B cell (primary cell): ENCODE measurements at regions of chr7 and their contacts with region 1.

Region 1: GRCh38 chr7:144127703-144128334 is 4.8 kb downstream of the OR2A14 start:
- DNase-seq: peak; percentile 82
- ATAC-seq: peak; percentile 98
- H3K4me3 ChIP-seq: no peak overlapping the region
- H3K4me3 Mint-ChIP-seq: no peak overlapping the region
- H3K27ac ChIP-seq: no peak overlapping the region
- H3K27ac Mint-ChIP-seq: no peak overlapping the region
- H3K4me1 ChIP-seq: no peaks in the 10 kb centered on the region
- H3K4me1 Mint-ChIP-seq: no peaks in the 10 kb centered on the region
- H3K27me3 ChIP-seq: no peaks in the 10 kb centered on the region
- H3K27me3 Mint-ChIP-seq: peaks cover 5% of the 10 kb centered on the region
- CTCF ChIP-seq: peak; percentile 89

Region 2: GRCh38 chr7:143733876-143734275 is 393.9 kb before region 1 on chr7:
- CTCF ChIA-PET with region 1: interaction called, 10 read pairs
- POLR2A ChIA-PET with region 1: no interaction called
- intact Hi-C with region 1: no loop called
- DNase-seq: no peak
- ATAC-seq: no peak
- H3K4me3 ChIP-seq: no peak overlapping the region
- H3K4me3 Mint-ChIP-seq: no peak overlapping the region
- H3K27ac ChIP-seq: no peak overlapping the region
- H3K27ac Mint-ChIP-seq: no peak overlapping the region
- H3K4me1 ChIP-seq: no peaks in the 10 kb centered on the region
- H3K4me1 Mint-ChIP-seq: no peaks in the 10 kb centered on the region
- H3K27me3 ChIP-seq: no peaks in the 10 kb centered on the region
- H3K27me3 Mint-ChIP-seq: no peaks in the 10 kb centered on the region
- CTCF ChIP-seq: no peak

Region 3: DNA sequence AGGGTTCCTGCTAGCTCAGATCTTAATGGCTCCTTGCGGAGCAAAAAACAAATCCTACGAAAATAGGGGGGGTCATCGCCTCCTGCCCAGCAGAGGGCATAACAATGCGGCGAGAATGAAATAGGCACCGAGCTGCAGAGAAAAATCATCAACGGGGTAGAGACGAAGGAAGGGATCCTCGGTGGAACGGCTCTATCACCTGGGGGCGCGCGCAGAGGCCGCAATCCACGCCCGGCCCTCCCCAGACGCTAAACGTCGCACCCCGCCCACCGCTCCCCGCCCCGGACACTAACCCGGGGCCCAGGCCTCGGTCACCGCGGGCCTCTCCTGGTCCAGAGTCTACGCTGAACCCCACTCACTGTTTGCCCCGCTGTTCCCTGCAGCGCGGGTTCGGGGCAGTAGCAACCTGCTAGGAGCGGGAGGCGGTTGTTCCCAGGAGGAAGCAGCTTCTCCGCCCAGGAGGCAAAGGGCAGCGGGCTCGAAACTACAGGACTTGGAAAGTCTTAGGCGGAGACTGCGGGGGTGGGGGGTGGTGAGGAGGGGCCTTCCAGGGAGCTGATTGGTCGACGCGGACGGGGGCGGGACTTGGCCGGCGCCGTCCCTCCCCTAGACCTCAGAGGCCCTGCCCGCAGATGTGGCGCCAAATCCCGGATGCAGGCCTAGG is 226.0 kb before region 1 on chr7 and contains the start of gene TCAF1:
- CTCF ChIA-PET with region 1: interaction called, 15 read pairs
- POLR2A ChIA-PET with region 1: no interaction called
- intact Hi-C with region 1: no loop called
- DNase-seq: peak; percentile 92
- ATAC-seq: peak; percentile 95
- H3K4me3 ChIP-seq: peak within 1 kb of the TSS; percentile 59 to 96 (median 87)
- H3K4me3 Mint-ChIP-seq: peak within 1 kb of the TSS; percentile 99
- H3K27ac ChIP-seq: peak within 1 kb of the TSS; percentile 34 to 67
- H3K27ac Mint-ChIP-seq: peak within 1 kb of the TSS; percentile 95
- H3K4me1 ChIP-seq: peaks cover 6 to 10% of the 10 kb centered on the region in 2 donors
- H3K4me1 Mint-ChIP-seq: peaks cover 24% of the 10 kb centered on the region
- H3K27me3 ChIP-seq: no peaks in the 10 kb centered on the region
- H3K27me3 Mint-ChIP-seq: no peaks in the 10 kb centered on the region
- CTCF ChIP-seq: peak; percentile 42
- total RNA-seq, gene TCAF1: 17.3 and 19.7 TPM in 2 replicates

Region 4: DNA sequence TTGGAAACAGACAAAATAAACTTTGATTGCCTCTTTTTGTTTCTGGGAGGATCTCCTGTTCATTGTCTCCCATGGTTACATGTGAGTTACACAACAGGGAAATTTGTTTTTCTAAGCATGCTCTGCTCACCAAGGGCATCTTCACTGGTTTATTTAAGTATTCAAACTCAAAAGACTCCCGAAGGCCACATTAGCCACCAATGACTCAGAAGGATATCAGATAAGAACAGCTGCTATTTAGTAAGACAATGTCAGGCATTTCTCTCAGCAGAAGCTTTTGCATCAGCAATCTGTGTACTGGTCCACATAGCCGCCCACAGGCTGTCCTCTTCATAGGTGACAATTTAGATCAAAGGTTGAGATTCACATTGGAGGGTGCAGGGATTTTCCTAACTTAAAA is 108.4 kb before region 1 on chr7:
- CTCF ChIA-PET with region 1: no interaction called
- POLR2A ChIA-PET with region 1: no interaction called
- intact Hi-C with region 1: no loop called
- DNase-seq: no peak
- ATAC-seq: no peak
- H3K4me3 ChIP-seq: no peak overlapping the region
- H3K4me3 Mint-ChIP-seq: no peak overlapping the region
- H3K27ac ChIP-seq: no peak overlapping the region
- H3K27ac Mint-ChIP-seq: no peak overlapping the region
- H3K4me1 ChIP-seq: no peaks in the 10 kb centered on the region
- H3K4me1 Mint-ChIP-seq: no peaks in the 10 kb centered on the region
- H3K27me3 ChIP-seq: no peaks in the 10 kb centered on the region
- H3K27me3 Mint-ChIP-seq: no peaks in the 10 kb centered on the region
- CTCF ChIP-seq: no peak

Region 5: DNA sequence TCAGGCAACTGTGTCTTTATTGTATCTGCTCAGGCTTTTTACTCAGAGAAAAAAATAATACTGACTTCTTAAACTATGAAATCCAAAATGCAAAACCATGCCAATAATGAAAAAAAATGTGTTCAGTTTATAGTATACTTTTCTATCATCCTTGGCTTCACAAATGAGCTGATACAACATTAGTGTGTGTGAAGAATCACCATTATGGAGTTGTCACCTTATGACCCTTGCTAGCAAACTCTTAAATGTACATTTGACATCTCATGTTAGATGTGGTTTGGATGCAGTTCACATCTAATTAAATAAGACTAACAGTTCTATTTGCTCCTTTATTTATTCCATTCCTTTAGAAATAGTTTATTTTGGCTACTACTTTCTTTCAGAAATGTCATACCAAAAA is 22.6 kb before region 1 on chr7:
- CTCF ChIA-PET with region 1: no interaction called
- POLR2A ChIA-PET with region 1: no interaction called
- intact Hi-C with region 1: no loop called
- DNase-seq: no peak
- ATAC-seq: no peak
- H3K4me3 ChIP-seq: no peak overlapping the region
- H3K4me3 Mint-ChIP-seq: no peak overlapping the region
- H3K27ac ChIP-seq: no peak overlapping the region
- H3K27ac Mint-ChIP-seq: no peak overlapping the region
- H3K4me1 ChIP-seq: no peaks in the 10 kb centered on the region
- H3K4me1 Mint-ChIP-seq: no peaks in the 10 kb centered on the region
- H3K27me3 ChIP-seq: peaks cover 0 to 3% (median 0%) of the 10 kb centered on the region in 4 experiments
- H3K27me3 Mint-ChIP-seq: peaks cover 12% of the 10 kb centered on the region
- CTCF ChIP-seq: no peak

Region 6: GRCh38 chr7:145350334-145350733 is 1222.5 kb after region 1 on chr7:
- CTCF ChIA-PET with region 1: no interaction called
- POLR2A ChIA-PET with region 1: no interaction called
- intact Hi-C with region 1: no loop called
- DNase-seq: no peak
- ATAC-seq: no peak
- H3K4me3 ChIP-seq: no peak overlapping the region
- H3K4me3 Mint-ChIP-seq: no peak overlapping the region
- H3K27ac ChIP-seq: no peak overlapping the region
- H3K27ac Mint-ChIP-seq: no peak overlapping the region
- H3K4me1 ChIP-seq: no peaks in the 10 kb centered on the region
- H3K4me1 Mint-ChIP-seq: no peaks in the 10 kb centered on the region
- H3K27me3 ChIP-seq: no peaks in the 10 kb centered on the region
- H3K27me3 Mint-ChIP-seq: no peaks in the 10 kb centered on the region
- CTCF ChIP-seq: no peak